Sigmoid colon (tissue), 7 donors: ENCODE measurements at regions of chr6 and their contacts with region 1.

Region 1: GRCh38 chr6:137866914-137867684 is at the start of gene TNFAIP3:
- DNase-seq: peak; percentile 98
- H3K4me3 ChIP-seq: peak within 1 kb of the TSS; percentile 88 to 96 (median 94)
- H3K27ac ChIP-seq: peak within 1 kb of the TSS; percentile 88 to 97 (median 94)
- H3K4me1 ChIP-seq: peaks cover 0 to 73% (median 57%) of the 10 kb centered on the region in 4 donors
- H3K27me3 ChIP-seq: no peaks in the 10 kb centered on the region
- CTCF ChIP-seq: peak in 3 of 4 experiments; percentile 48 to 73 (median 52)
- EP300 ChIP-seq: peak in 3 of 4 donors; percentile 6 to 36 (median 21)
- POLR2A ChIP-seq: peak; percentile 74 to 81
- total RNA-seq, gene TNFAIP3: 14.6 to 37.6 (median 21.0) TPM

Region 2: GRCh38 chr6:137342607-137343186 is 524.4 kb before region 1 on chr6:
- intact Hi-C with region 1: no loop called
- DNase-seq: no peak
- H3K4me3 ChIP-seq: peak overlapping the region in 3 of 4 donors; percentile 29 to 40 (median 36)
- H3K27ac ChIP-seq: no peak overlapping the region
- H3K4me1 ChIP-seq: peaks cover 0 to 15% (median 12%) of the 10 kb centered on the region in 4 donors
- H3K27me3 ChIP-seq: no peaks in the 10 kb centered on the region
- CTCF ChIP-seq: no peak
- EP300 ChIP-seq: no peak
- POLR2A ChIP-seq: no peak

Region 3: DNA sequence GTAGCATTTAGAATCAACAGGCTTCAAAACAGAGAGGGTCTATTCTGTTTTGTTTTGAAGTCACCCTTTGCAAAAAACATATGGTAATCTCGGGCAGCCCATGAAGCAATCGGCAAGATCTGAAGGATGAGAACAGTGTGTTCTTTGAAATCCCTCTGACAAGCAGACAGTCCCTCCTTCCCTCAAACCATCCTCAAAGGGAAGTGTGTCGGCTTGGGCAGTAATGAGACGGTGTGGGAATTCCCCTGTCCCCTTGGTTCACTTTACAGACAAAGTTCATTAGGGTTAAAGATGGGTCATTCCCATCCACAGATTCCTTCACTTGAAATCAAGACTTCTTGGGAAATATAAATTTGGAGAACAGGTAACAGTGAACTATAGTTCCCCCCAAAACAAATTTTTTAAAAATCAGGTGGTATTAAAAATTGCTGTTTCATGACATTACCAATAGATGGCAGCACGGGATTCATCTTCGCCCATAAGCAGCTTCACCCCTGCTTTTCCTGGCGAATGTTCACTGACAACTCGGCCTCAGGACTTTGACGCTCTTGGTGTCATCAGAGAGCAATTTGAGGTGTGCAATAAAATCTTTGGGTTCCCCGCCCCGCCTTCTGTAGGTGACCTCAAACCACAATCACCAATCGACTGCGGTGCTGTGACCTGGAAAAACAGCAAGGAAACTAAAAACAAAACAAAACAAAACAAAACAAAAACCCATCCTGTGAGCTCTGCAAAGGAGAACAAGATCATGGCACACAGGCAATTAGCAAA is 159.3 kb before region 1 on chr6:
- intact Hi-C with region 1: loop called (anchors 1 kb)
- DNase-seq: peak; percentile 85
- H3K4me3 ChIP-seq: peak overlapping the region in 1 of 4 donors; percentile 17
- H3K27ac ChIP-seq: peak overlapping the region in 2 of 4 donors; percentile 5 to 35
- H3K4me1 ChIP-seq: peaks cover 0 to 26% (median 6%) of the 10 kb centered on the region in 4 donors
- H3K27me3 ChIP-seq: no peaks in the 10 kb centered on the region
- CTCF ChIP-seq: peak; percentile 44 to 78 (median 68)
- EP300 ChIP-seq: peak in 2 of 4 donors; percentile 53 to 69
- POLR2A ChIP-seq: no peak

Region 4: DNA sequence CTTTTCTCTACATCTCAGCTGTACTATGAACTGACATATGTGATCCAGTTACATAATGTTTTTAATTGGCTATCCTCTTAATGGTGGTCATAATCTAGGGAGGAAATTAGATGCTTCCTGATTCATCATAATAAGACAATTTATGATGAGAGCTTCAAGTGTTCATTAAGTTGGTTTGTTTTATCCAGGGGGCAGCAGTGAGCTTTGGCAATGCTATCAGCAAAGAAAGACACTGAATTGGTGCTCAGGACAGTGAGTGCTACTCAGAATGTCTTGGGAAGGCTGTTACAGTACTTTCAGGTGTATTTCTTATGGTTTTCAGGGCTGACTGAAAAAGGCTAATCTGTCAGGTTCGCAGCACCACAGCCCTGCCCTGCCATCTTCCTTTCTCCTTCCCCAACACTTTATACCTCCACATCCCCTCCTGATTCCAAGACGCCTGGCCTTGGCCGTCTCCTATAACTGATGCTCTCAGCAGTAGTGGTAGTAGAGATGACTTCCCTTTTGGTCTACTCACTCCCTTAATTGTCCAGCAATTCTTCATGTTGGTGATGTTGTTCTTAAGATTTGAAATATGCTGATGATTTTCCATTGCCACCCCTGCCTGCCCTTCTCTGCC is 67.0 kb before region 1 on chr6:
- intact Hi-C with region 1: loop called (anchors 2 kb)
- DNase-seq: no peak
- H3K4me3 ChIP-seq: no peak overlapping the region
- H3K27ac ChIP-seq: peak overlapping the region in 1 of 4 donors; percentile 5
- H3K4me1 ChIP-seq: peaks cover 0 to 30% (median 16%) of the 10 kb centered on the region in 4 donors
- H3K27me3 ChIP-seq: no peaks in the 10 kb centered on the region
- CTCF ChIP-seq: peak; percentile 13 to 43 (median 31)
- EP300 ChIP-seq: no peak
- POLR2A ChIP-seq: no peak

Region 5: DNA sequence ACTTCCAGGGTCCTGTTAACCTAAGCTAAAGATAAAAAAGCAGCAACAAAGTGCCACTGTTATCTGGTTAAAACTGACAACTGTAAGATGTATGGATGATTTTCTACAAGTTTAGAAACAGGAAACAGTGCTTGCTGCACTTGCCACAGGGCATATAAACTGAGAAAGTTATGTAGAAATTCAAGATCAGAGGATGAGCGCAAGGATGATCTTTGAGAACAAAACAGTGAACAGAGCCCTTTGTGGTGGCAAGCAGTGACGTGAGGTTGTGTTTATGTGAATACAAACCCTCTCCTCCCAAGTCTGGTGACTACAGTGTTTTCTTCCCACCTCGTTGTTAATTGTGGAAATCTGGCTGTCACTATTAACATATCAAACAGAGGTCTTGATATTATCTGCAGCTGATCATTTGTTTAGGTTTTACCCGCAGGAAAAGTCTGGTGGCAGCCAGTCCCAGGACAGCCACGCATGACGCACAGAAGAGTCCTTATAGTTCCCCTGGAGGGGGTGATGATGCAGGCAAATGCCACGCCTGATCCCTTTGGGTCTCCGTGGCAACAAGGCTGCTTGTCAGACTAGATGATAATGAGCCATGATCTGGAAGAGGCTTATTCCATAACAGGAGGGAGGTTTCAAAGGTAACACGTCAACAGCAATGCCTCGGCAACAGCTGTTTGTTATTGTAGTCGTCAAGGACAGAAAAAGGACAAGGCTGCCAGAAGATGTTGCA is 43.1 kb before region 1 on chr6:
- intact Hi-C with region 1: loop called (anchors 2 kb)
- DNase-seq: peak; percentile 93
- H3K4me3 ChIP-seq: no peak overlapping the region
- H3K27ac ChIP-seq: peak overlapping the region; percentile 63 to 76 (median 71)
- H3K4me1 ChIP-seq: peaks cover 0 to 56% (median 38%) of the 10 kb centered on the region in 4 donors
- H3K27me3 ChIP-seq: no peaks in the 10 kb centered on the region
- CTCF ChIP-seq: no peak
- EP300 ChIP-seq: peak; percentile 81 to 98 (median 86)
- POLR2A ChIP-seq: no peak

Region 6: DNA sequence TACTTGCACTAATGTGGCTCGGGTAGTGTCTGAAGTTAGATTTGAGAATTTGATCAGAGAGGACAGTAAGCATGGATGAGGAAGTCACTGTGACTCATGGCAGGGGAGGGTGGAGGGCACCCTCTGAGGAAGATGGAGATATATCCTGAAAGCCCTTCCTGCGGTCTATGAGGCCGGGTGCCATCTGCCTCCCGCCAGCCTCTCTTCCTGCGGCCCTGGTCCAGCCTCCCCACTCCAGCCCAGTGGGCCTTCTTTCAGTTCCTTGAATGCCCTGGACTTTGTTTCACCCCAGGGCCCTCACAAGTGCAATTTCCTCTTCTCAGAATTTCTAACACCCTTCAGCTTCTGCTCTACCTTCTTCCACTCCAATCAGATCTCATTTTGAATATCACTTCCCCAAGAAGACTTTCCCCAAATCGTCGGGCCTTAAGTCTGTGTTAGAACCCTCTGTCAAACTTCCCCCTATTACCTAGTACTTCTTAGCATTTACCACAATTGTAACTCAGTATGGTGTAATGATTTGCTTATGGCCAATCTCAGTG is 20.3 kb before region 1 on chr6:
- intact Hi-C with region 1: loop called (anchors 1 kb)
- DNase-seq: peak; percentile 79
- H3K4me3 ChIP-seq: no peak overlapping the region
- H3K27ac ChIP-seq: peak overlapping the region in 2 of 4 donors; percentile 73 to 83
- H3K4me1 ChIP-seq: peaks cover 0 to 41% (median 40%) of the 10 kb centered on the region in 4 donors
- H3K27me3 ChIP-seq: no peaks in the 10 kb centered on the region
- CTCF ChIP-seq: no peak
- EP300 ChIP-seq: no peak
- POLR2A ChIP-seq: no peak

Region 7: GRCh38 chr6:137944793-137945498 is 77.8 kb after region 1 on chr6:
- intact Hi-C with region 1: loop called (anchors 1 kb)
- DNase-seq: no peak
- H3K4me3 ChIP-seq: no peak overlapping the region
- H3K27ac ChIP-seq: no peak overlapping the region
- H3K4me1 ChIP-seq: peaks cover 0 to 12% (median 2%) of the 10 kb centered on the region in 4 donors
- H3K27me3 ChIP-seq: no peaks in the 10 kb centered on the region
- CTCF ChIP-seq: peak; percentile 51 to 77 (median 66)
- EP300 ChIP-seq: no peak
- POLR2A ChIP-seq: no peak

Region 8: DNA sequence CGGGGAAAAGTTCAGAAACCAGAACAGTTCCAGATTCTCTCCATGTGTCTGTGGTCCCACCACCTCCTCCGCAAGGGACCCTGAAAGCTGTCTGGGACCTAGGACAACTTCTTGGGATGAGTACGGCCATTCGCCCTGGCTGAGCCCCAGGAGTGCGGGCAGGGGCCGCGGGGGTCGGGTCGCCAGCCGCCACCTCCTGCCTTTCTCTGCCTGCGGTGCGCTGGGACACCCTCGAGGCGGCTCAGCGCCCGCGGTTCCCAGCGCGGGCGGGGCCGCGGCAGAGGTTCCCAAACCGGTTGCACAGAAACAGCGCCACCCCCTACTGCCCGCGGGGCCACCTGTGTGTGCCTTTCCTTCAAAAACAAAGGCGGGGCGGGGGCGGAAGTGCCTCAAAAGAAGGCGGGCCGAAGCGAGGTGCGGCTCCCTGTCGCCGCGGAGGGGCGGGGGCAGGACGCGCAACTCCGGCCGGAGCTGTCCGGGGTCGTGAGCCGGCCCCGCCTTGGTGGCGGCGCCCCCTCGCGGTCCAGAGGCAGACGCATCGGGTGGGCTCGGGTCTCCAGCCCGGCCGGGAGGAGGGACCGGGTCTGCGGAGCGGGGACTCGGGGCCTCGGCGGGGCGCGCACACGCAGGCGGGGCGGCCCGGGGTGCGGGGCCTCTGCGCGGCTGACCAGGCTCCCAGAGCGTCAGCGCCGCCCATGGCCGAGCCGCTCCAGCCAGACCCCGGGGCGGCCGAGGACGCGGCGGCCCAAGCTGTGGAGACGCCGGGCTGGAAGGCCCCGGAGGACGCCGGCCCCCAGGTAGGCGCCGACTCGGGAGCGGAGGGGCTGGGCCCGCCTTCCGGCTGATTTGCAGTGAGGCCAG is 536.9 kb after region 1 on chr6 and contains the start of gene HEBP2:
- intact Hi-C with region 1: loop called (anchors 10 kb)
- DNase-seq: peak; percentile 96
- H3K4me3 ChIP-seq: peak within 1 kb of the TSS; percentile 66 to 95 (median 76)
- H3K27ac ChIP-seq: peak within 1 kb of the TSS; percentile 90 to 94 (median 92)
- H3K4me1 ChIP-seq: peaks cover 0 to 15% (median 11%) of the 10 kb centered on the region in 4 donors
- H3K27me3 ChIP-seq: no peaks in the 10 kb centered on the region
- CTCF ChIP-seq: peak in 1 of 4 experiments; percentile 44
- EP300 ChIP-seq: no peak
- POLR2A ChIP-seq: peak; percentile 35 to 63
- total RNA-seq, gene HEBP2: 46.3 to 75.3 (median 65.5) TPM